T-cell (primary cell): ENCODE measurements at regions of chr5 and their contacts with region 1.

Region 1: DNA sequence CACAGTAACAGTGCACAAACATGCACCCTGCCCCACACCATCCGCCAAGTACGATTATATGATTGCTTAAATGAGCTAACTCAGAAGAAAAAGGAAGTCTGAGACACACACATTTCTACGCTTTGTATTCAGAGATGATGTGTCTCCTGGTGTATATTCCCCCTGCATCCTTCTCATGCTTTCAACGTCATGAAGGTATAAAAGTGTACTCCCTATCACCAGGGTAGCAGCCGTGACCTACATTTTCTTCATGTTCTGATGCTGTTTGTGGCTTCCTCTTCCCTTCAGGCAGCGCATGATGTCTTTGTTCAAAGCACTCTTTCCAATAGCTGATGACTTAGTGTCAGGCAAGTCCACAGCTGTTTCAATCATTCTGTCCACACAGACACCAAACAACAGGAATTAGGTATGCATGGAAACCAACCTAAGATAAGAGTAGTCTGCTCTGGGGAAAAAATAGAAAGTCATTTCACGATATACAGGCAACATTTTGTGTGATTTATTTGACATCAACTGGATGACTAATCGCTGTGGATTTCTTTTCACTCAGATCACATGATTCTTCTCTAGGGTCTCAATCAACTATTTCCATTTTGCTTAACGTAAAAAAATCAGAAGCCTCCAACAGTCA is 269.4 kb upstream of the PTGER4 start:
- DNase-seq: peak; percentile 35 to 95 (median 78)
- ATAC-seq: peak; percentile 86 to 91 (median 89)
- H3K4me3 ChIP-seq: peak overlapping the region; percentile 31 to 47
- H3K4me3 Mint-ChIP-seq: peak overlapping the region; percentile 66 to 80 (median 76)
- H3K27ac ChIP-seq: peak overlapping the region; percentile 97
- H3K27ac Mint-ChIP-seq: peak overlapping the region; percentile 98 to 100
- H3K4me1 ChIP-seq: peaks cover 49 to 53% of the 10 kb centered on the region in 2 experiments
- H3K4me1 Mint-ChIP-seq: peaks cover 64 to 67% (median 65%) of the 10 kb centered on the region in 3 donors
- H3K27me3 ChIP-seq: no peaks in the 10 kb centered on the region
- H3K27me3 Mint-ChIP-seq: no peaks in the 10 kb centered on the region

Region 2: DNA sequence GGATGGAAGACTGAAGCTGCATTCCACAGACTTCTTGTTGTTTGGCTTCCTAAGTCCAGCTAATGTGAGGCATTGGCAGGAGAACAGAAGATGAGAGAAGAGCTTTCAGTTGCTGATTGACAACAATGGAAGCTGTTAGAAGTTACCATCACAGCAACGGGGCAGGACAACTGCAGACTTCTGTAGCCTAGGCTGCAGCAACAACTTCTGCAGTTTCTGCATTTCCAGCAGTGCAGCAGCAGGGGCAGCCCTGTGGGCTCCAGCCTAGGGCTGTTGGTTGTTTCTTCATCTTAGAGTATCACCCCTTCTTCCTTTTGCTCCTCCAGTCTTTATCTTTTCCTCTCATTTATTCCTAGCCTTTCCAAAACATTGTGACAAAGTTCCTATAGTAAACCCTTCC is 259.4 kb before region 1 on chr5:
- CTCF ChIA-PET with region 1: no interaction called
- POLR2A ChIA-PET with region 1: no interaction called
- DNase-seq: no peak
- ATAC-seq: no peak
- H3K4me3 ChIP-seq: no peak overlapping the region
- H3K4me3 Mint-ChIP-seq: no peak overlapping the region
- H3K27ac ChIP-seq: no peak overlapping the region
- H3K27ac Mint-ChIP-seq: no peak overlapping the region
- H3K4me1 ChIP-seq: no peaks in the 10 kb centered on the region
- H3K4me1 Mint-ChIP-seq: no peaks in the 10 kb centered on the region
- H3K27me3 ChIP-seq: no peaks in the 10 kb centered on the region
- H3K27me3 Mint-ChIP-seq: peaks cover 0 to 9% of the 10 kb centered on the region in 2 donors

Region 3: DNA sequence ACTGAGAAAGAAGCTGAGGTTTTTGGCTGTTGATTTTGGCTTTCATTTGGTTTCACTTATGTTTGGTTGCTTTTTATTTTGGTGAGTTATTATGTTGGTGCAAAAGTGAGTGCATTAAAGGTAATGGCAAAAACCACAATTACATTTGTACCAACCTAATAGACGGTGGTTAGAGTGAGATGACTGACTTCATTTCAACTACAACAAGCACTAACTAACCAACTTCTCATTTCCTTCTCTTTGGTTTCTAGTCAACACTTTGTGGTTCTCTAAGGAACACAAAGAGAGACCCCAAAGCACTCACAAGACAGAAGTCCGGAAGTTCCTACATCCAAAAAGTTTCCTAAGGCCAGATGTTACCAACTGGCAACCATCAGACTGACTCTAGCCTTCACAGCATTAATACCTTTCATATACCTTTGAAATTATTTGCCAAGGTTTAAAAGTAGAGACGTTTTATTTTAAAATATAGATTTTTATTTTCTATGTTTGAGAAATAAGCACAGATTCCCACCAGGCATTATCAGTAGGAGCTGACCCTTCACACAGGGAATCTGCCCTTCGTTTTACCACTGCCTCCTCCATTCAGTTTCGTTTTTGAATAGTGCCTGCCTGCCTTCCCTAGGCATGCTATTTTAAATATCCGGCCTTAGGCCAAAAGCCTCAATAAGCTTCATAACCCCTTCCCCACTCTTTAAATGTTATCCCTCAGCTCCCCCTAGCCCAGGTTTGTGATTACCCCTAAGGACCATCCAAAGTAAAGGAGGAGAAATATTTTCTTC is 31.8 kb before region 1 on chr5:
- CTCF ChIA-PET with region 1: interaction called in 1 of 2 experiments, 3 read pairs
- POLR2A ChIA-PET with region 1: interaction called in 1 of 2 experiments, 15 read pairs
- DNase-seq: peak in 1 of 35 experiments; percentile 64
- ATAC-seq: peak in 3 of 4 experiments; percentile 27 to 81 (median 54)
- H3K4me3 ChIP-seq: no peak overlapping the region
- H3K4me3 Mint-ChIP-seq: peak overlapping the region; percentile 5 to 41 (median 31)
- H3K27ac ChIP-seq: peak overlapping the region; percentile 39
- H3K27ac Mint-ChIP-seq: peak overlapping the region; percentile 82 to 90
- H3K4me1 ChIP-seq: peaks cover 9 to 11% of the 10 kb centered on the region in 2 experiments
- H3K4me1 Mint-ChIP-seq: peaks cover 28 to 57% (median 47%) of the 10 kb centered on the region in 3 donors
- H3K27me3 ChIP-seq: no peaks in the 10 kb centered on the region
- H3K27me3 Mint-ChIP-seq: no peaks in the 10 kb centered on the region

Region 4: GRCh38 chr5:40390281-40391149 is 19.8 kb before region 1 on chr5:
- CTCF ChIA-PET with region 1: interaction called, 5 to 6 read pairs
- POLR2A ChIA-PET with region 1: interaction called in 1 of 2 experiments, 15 read pairs
- DNase-seq: peak in 1 of 35 experiments; percentile 62
- ATAC-seq: peak in 3 of 4 experiments; percentile 36 to 56 (median 46)
- H3K4me3 ChIP-seq: no peak overlapping the region
- H3K4me3 Mint-ChIP-seq: no peak overlapping the region
- H3K27ac ChIP-seq: peak overlapping the region; percentile 52
- H3K27ac Mint-ChIP-seq: peak overlapping the region; percentile 48 to 74
- H3K4me1 ChIP-seq: peaks cover 9 to 29% of the 10 kb centered on the region in 2 experiments
- H3K4me1 Mint-ChIP-seq: peaks cover 40 to 56% (median 51%) of the 10 kb centered on the region in 3 donors
- H3K27me3 ChIP-seq: no peaks in the 10 kb centered on the region
- H3K27me3 Mint-ChIP-seq: no peaks in the 10 kb centered on the region

Region 5: DNA sequence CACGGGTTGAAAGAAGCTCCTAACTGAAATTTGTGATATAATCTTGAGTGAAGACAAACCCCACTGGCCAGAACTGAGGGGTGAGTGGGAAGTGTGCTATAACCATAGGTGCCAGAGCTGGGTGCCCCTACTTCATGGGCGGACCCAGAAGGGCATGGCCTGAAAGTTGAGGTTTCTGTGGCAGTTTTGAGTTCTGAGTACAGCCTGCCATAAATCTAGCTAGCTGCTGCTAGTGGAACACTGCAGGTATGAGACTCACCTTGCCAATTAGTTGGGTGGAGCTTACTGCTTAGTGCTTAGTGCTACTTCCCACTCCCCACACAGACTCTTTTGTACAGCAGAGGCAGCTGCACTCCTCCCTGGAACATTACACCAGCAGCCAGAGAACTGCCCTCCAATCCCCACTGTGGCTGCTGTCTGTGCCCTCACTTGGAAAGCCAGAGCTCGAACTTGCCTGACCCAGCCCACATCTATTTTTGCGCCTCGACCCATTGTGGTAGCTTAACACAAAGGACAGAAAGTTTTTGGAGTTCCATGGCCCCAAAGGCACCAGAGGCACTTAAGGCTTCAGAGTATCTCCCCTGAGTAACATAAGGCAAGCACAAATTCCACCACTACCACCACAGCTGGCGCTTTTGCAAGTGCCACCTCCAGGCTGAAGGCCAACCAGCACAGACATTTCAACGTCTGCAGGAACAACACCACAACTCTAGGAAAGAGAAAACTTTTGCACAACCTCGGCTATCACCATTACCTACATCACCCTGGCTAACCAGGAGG is 242.3 kb after region 1 on chr5:
- CTCF ChIA-PET with region 1: interaction called in 1 of 2 experiments, 3 read pairs
- POLR2A ChIA-PET with region 1: interaction called in 1 of 2 experiments, 10 read pairs
- DNase-seq: peak in 10 of 35 experiments; percentile 8 to 38 (median 22)
- ATAC-seq: peak; percentile 20 to 39 (median 30)
- H3K4me3 ChIP-seq: no peak overlapping the region
- H3K4me3 Mint-ChIP-seq: peak overlapping the region; percentile 7 to 85 (median 64)
- H3K27ac ChIP-seq: peak overlapping the region; percentile 83
- H3K27ac Mint-ChIP-seq: peak overlapping the region; percentile 96 to 99
- H3K4me1 ChIP-seq: peaks cover 27 to 50% of the 10 kb centered on the region in 2 experiments
- H3K4me1 Mint-ChIP-seq: peaks cover 72 to 81% (median 73%) of the 10 kb centered on the region in 3 donors
- H3K27me3 ChIP-seq: no peaks in the 10 kb centered on the region
- H3K27me3 Mint-ChIP-seq: no peaks in the 10 kb centered on the region

Region 6: DNA sequence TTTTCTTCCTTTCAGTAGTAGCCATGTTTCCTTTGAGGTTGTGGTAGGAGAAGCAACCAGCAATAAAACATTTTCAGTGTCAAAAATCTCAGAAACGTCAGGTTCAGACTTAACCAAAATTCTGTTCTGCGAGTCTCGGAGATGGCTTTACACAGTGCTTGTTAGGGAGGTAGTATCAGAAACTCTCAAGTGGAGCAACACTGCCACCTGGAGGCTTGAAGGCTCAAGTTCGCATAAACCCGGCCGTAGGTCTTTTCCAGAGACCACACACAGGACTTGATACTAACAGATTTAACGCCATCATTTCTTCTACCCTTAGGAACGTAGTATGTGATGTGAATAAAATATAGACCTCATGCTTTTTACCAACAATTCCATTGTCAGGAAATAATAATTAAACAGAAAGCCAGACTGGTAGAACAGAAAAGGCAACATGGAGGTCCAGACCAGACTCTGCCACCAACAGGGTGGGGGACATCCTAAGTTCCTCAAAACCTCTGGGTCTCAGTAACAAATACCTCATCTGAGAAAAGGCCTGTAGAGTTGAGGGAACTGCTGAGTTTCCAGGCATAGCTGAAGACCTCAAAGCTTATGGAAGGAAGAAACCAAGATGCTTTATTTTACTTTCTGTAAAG is 277.9 kb after region 1 on chr5:
- CTCF ChIA-PET with region 1: interaction called in 1 of 2 experiments, 11 read pairs
- POLR2A ChIA-PET with region 1: interaction called, 4 to 52 read pairs
- DNase-seq: peak; percentile 70 to 96 (median 84)
- ATAC-seq: peak; percentile 71 to 81 (median 74)
- H3K4me3 ChIP-seq: peak overlapping the region; percentile 3 to 28
- H3K4me3 Mint-ChIP-seq: peak overlapping the region; percentile 81 to 100 (median 92)
- H3K27ac ChIP-seq: peak overlapping the region; percentile 59
- H3K27ac Mint-ChIP-seq: peak overlapping the region; percentile 92 to 94
- H3K4me1 ChIP-seq: peaks cover 42 to 43% of the 10 kb centered on the region in 2 experiments
- H3K4me1 Mint-ChIP-seq: peaks cover 82 to 89% (median 85%) of the 10 kb centered on the region in 3 donors
- H3K27me3 ChIP-seq: no peaks in the 10 kb centered on the region
- H3K27me3 Mint-ChIP-seq: no peaks in the 10 kb centered on the region